ENCODE measurements at regions of chr4 and their contacts with region 1.

Region 1: GRCh38 chr4:109702950-109703663 is at the start of gene CASP6:
- DNase-seq: peak; percentile 66
- ATAC-seq: peak; percentile 94
- H3K4me3 ChIP-seq: peak within 1 kb of the TSS; percentile 94
- H3K27ac ChIP-seq: peak within 1 kb of the TSS; percentile 80
- H3K4me1 ChIP-seq: peaks cover 7% of the 10 kb centered on the region
- H3K27me3 ChIP-seq: no peaks in the 10 kb centered on the region
- CTCF ChIP-seq: peak; percentile 61
- POLR2A ChIP-seq: no peak
- RAD21 ChIP-seq: peak; percentile 56
- total RNA-seq, gene CASP6: 44.1 and 45.0 TPM in 2 replicates

Region 2: GRCh38 chr4:109433205-109434006 is 269.7 kb before region 1 on chr4 and contains the start of gene SEC24B:
- CTCF ChIA-PET with region 1: no interaction called
- POLR2A ChIA-PET with region 1: no interaction called
- dilution Hi-C with region 1: no loop called
- in situ Hi-C with region 1: no loop called
- intact Hi-C with region 1: loop called (anchors 5 kb)
- DNase-seq: peak; percentile 62
- ATAC-seq: peak; percentile 87
- H3K4me3 ChIP-seq: peak within 1 kb of the TSS; percentile 85
- H3K27ac ChIP-seq: peak within 1 kb of the TSS; percentile 97
- H3K4me1 ChIP-seq: peaks cover 3% of the 10 kb centered on the region
- H3K27me3 ChIP-seq: no peaks in the 10 kb centered on the region
- CTCF ChIP-seq: peak; percentile 85
- POLR2A ChIP-seq: peak; percentile 63; the same call in 1 of the 2 replicates
- RAD21 ChIP-seq: peak; percentile 46
- total RNA-seq, gene SEC24B: 19.0 and 19.4 TPM in 2 replicates

Region 3: DNA sequence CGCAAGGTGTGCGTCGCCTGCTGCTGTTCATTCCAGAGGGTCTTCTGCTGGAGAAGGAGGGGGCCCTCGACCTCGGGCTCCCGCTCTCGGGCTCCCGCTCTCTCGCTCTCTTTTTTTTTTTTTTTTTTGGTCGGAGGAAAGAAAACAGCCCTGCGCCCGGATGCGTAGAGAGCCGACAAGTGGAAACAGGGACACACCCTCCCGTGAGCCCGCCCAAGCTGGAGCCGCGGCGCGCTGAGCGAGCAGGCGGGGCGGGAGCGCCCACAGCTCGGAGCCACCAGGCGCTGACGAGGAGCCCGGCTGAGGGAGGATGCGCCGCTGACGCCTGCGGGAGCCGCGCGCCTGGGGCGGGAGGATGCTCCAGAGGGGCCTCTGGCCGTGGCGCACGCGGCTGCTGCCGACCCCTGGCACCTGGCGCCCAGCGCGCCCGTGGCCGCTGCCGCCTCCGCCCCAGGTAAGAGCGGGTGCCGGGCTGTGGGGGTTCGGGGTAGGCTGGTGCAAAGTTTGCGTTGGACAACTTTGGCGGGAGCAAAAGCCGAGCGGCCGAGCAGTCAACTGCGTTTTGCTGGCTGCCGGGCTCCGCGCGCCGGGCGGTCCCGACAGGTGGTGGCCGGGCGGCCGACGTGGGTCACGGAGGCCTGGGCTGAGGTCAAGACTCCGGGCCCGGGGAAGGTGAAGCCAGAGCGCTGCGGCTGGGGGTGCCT is 143.0 kb before region 1 on chr4 and contains the start of gene MCUB:
- CTCF ChIA-PET with region 1: no interaction called
- POLR2A ChIA-PET with region 1: no interaction called
- dilution Hi-C with region 1: no loop called
- in situ Hi-C with region 1: no loop called
- intact Hi-C with region 1: loop called (anchors 1 kb)
- DNase-seq: peak; percentile 89
- ATAC-seq: peak; percentile 95
- H3K4me3 ChIP-seq: peak within 1 kb of the TSS; percentile 61
- H3K27ac ChIP-seq: peak within 1 kb of the TSS; percentile 67
- H3K4me1 ChIP-seq: no peaks in the 10 kb centered on the region; the same call in 1 of the 2 replicates
- H3K27me3 ChIP-seq: no peaks in the 10 kb centered on the region
- CTCF ChIP-seq: no peak
- POLR2A ChIP-seq: no peak; the same call in 1 of the 2 replicates
- RAD21 ChIP-seq: no peak
- total RNA-seq, gene MCUB: 20.4 and 21.4 TPM in 2 replicates

Region 4: DNA sequence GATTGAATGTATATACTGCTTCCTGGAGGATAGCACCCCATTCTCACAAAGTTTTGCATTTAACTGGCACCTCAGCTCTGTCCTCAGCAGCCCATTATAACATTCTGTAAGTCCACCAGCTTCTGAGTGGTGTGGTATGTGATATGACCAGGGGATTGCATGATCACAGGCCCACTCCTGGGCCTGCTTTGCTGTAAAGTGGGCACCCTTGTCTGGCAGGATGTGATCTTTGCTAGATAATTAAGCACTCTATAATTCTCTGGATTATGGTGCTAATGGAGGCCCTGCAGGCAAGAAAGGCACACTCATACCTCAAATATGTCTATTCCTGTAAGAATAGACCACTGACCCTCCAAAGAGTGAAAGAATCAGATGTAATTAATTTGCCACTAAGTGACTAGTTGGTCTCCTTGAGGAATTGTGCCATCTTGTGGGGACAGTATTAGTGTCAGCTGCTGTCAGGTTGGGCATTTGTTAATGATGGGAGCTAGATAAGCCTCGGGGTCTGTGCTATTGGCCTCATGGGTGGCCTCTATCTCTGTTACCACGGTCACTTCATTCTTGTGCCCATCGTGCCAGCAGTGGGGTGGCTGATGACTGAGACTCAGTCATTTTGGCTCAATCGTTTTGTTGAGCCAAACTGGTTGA is 100.9 kb after region 1 on chr4:
- CTCF ChIA-PET with region 1: no interaction called
- POLR2A ChIA-PET with region 1: no interaction called
- dilution Hi-C with region 1: no loop called
- in situ Hi-C with region 1: no loop called
- intact Hi-C with region 1: loop called (anchors 2 kb)
- DNase-seq: peak; percentile 37
- ATAC-seq: peak; percentile 65
- H3K4me3 ChIP-seq: no peak overlapping the region
- H3K27ac ChIP-seq: no peak overlapping the region
- H3K4me1 ChIP-seq: no peaks in the 10 kb centered on the region
- H3K27me3 ChIP-seq: no peaks in the 10 kb centered on the region; the same call in 1 of the 2 replicates
- CTCF ChIP-seq: peak; percentile 43
- POLR2A ChIP-seq: no peak
- RAD21 ChIP-seq: peak; percentile 50

Region 5: DNA sequence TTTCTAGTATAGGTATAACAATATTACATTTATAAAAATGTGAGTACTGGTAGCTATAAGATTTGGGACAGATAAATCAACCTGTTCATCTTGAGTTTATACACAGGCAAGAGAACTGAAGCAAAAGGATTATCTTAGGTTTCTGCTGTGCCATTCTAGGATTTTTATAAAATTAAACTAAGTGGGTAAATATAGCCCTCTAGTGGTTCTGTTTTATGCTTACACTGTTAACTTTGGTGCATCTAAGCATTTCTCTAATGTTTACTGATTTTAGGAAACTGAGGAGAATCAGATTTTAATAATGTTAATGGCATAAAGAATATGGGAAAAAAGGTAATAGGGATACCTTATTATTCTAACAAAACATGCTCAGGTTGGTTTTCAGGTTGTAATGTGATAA is 123.6 kb after region 1 on chr4:
- CTCF ChIA-PET with region 1: interaction called, 3 read pairs
- POLR2A ChIA-PET with region 1: no interaction called
- dilution Hi-C with region 1: no loop called
- in situ Hi-C with region 1: no loop called
- intact Hi-C with region 1: loop called (anchors 1 kb)
- DNase-seq: peak; percentile 33
- ATAC-seq: peak; percentile 81
- H3K4me3 ChIP-seq: no peak overlapping the region
- H3K27ac ChIP-seq: no peak overlapping the region
- H3K4me1 ChIP-seq: no peaks in the 10 kb centered on the region
- H3K27me3 ChIP-seq: no peaks in the 10 kb centered on the region
- CTCF ChIP-seq: peak; percentile 62
- POLR2A ChIP-seq: no peak
- RAD21 ChIP-seq: peak; percentile 61

Measured in IMR-90 (cell line).